Gastrocnemius medialis (tissue), 4 donors: ENCODE measurements at regions of chr2 and their contacts with region 1.

Region 1: GRCh38 chr2:64945973-64946768 is 43.0 kb upstream of the SLC1A4 start:
- DNase-seq: no peak
- ATAC-seq: no peak
- H3K4me3 ChIP-seq: no peak overlapping the region
- H3K27ac ChIP-seq: no peak overlapping the region
- H3K4me1 ChIP-seq: peaks cover 34 to 39% of the 10 kb centered on the region in 2 donors
- H3K27me3 ChIP-seq: no peaks in the 10 kb centered on the region
- CTCF ChIP-seq: no peak
- POLR2A ChIP-seq: no peak

Region 2: DNA sequence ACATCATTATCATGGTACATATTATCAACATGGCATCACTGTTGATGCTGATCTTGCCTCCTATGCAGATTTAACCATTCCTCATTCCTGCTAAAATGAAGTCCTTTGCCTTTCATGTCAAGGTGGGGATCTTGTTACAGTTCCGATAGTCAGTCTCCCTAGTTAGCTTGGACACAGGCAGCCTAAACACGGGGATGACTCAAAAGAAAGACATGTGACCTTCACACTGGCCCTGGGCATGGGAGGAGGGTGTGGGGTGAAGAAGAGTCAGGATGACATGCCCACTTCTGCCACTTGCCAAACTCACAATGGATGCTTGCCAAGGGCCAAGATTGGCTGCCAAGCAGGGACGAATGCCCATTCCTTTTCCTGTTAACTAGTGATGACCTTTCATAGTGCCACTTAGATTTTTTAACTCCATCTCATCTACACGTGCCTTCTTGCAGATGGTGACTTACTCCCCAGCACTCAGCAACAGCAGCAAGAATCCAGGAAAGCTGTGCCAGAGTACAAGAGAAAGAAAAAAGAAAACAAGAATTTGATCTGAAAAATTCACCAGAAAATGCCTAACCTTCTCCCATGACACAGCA is 29.2 kb after region 1 on chr2:
- in situ Hi-C with region 1: no loop called
- intact Hi-C with region 1: loop called (anchors 1 kb)
- DNase-seq: peak; percentile 79 to 92
- ATAC-seq: peak; percentile 92
- H3K4me3 ChIP-seq: no peak overlapping the region
- H3K27ac ChIP-seq: peak overlapping the region; percentile 81 to 85 (median 84)
- H3K4me1 ChIP-seq: peaks cover 48 to 58% of the 10 kb centered on the region in 2 donors
- H3K27me3 ChIP-seq: no peaks in the 10 kb centered on the region
- CTCF ChIP-seq: no peak
- POLR2A ChIP-seq: no peak

Region 3: GRCh38 chr2:64996871-64997307 is 50.7 kb after region 1 on chr2:
- in situ Hi-C with region 1: no loop called
- intact Hi-C with region 1: loop called (anchors 2 kb)
- DNase-seq: peak in 1 of 2 donors; percentile 65
- ATAC-seq: peak; percentile 48 to 79
- H3K4me3 ChIP-seq: no peak overlapping the region
- H3K27ac ChIP-seq: peak overlapping the region; percentile 72 to 96 (median 78)
- H3K4me1 ChIP-seq: peaks cover 61 to 65% of the 10 kb centered on the region in 2 donors
- H3K27me3 ChIP-seq: no peaks in the 10 kb centered on the region
- CTCF ChIP-seq: peak in 2 of 5 experiments; percentile 21 to 35
- POLR2A ChIP-seq: no peak

Region 4: GRCh38 chr2:65278531-65278981 is 332.4 kb after region 1 on chr2:
- in situ Hi-C with region 1: no loop called
- intact Hi-C with region 1: no loop called
- DNase-seq: no peak
- ATAC-seq: no peak
- H3K4me3 ChIP-seq: no peak overlapping the region
- H3K27ac ChIP-seq: peak overlapping the region in 1 of 4 donors; percentile 10
- H3K4me1 ChIP-seq: peaks cover 0 to 22% of the 10 kb centered on the region in 2 donors
- H3K27me3 ChIP-seq: peaks cover 0 to 4% (median 3%) of the 10 kb centered on the region in 3 donors
- CTCF ChIP-seq: no peak
- POLR2A ChIP-seq: no peak